Activated B cell treated with CpG ODN at 0.5 μM for 24 hours (primary cell): ENCODE measurements at regions of chr7 and their contacts with region 1.

Region 1: DNA sequence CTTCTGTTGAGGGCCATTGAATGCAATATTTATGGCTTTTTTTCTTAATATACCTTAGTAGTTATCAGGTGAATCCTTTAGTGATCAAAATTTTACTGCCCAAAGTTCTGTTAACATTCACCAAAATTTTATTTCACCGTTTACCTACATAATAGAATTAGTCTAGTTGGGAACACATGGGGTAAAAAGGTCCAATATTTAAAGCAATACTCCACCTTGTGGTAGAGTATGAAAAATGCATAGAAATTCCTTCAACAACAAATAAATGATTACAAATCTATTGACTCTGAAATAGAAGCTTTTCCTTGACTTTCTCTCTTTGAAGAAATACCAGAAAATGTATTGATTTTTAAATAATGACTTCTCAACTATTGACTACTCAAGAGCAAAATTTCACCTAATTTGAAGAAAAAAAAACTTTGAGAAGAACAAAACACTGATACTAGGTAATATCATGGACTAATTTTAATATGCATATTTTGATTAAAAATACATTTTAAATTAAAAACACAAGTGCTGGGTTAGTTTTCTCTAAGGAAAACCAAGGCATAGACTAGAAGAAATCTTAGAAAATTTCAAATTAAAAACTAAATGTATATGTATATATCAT is 43.3 kb downstream of the POLR1F start:
- DNase-seq: no peak
- ATAC-seq: peak; percentile 32
- H3K4me3 Mint-ChIP-seq: no peak overlapping the region
- H3K27ac Mint-ChIP-seq: no peak overlapping the region
- H3K4me1 Mint-ChIP-seq: peaks cover 20% of the 10 kb centered on the region
- H3K27me3 Mint-ChIP-seq: no peaks in the 10 kb centered on the region
- CTCF ChIP-seq: no peak

Region 2: GRCh38 chr7:17769918-17770317 is 1895.6 kb before region 1 on chr7:
- CTCF ChIA-PET with region 1: no interaction called
- POLR2A ChIA-PET with region 1: no interaction called
- intact Hi-C with region 1: loop called (anchors 2 kb)
- DNase-seq: no peak
- ATAC-seq: peak; percentile 75
- H3K4me3 Mint-ChIP-seq: no peak overlapping the region
- H3K27ac Mint-ChIP-seq: no peak overlapping the region
- H3K4me1 Mint-ChIP-seq: peaks cover 11% of the 10 kb centered on the region
- H3K27me3 Mint-ChIP-seq: no peaks in the 10 kb centered on the region
- CTCF ChIP-seq: no peak

Region 3: DNA sequence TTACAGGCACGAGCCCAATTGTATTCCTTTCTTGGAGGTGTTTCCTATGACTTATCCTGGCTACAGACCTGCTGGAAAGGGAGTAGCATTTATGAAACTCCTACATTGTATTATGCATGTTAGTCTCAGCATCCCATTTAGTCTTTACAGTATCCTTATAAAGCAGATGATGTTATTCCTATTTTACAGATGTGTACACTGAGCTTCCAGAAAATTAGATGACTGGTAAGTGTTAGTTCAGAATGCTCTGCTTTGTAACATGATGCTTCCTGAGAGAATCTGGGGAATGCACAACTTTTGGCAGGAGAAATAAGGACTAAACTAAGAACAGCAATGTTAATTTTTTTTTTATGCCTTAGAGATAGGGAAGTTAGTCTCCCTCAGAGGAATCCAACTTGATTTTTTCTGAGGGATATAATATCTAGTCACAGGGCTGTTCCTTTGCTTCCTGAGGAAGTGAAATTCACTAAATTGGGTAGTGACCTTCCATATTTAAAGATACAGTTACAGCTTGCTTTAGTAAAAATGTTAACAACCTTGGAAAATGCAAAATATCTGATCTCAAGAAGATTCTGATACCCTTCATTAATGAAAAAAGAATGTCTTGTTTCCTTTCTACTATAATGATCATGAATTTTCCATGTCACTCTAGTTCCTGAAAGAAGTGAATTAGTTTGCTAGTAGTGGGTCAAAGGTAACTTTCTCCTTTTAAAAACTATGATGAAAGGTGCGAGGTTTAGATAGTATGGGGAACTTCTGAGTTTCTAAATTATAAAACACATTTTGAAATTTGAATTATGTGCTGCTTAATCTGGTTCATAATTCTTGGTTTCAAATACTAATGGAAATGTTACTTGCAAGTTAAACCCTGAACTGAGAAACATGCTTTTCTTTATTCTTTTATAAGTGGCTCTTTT is 1443.9 kb before region 1 on chr7:
- CTCF ChIA-PET with region 1: no interaction called
- POLR2A ChIA-PET with region 1: no interaction called
- intact Hi-C with region 1: loop called (anchors 5 kb)
- DNase-seq: no peak
- ATAC-seq: no peak
- H3K4me3 Mint-ChIP-seq: no peak overlapping the region
- H3K27ac Mint-ChIP-seq: peak overlapping the region; percentile 12
- H3K4me1 Mint-ChIP-seq: peaks cover 56% of the 10 kb centered on the region
- H3K27me3 Mint-ChIP-seq: no peaks in the 10 kb centered on the region
- CTCF ChIP-seq: no peak

Region 4: DNA sequence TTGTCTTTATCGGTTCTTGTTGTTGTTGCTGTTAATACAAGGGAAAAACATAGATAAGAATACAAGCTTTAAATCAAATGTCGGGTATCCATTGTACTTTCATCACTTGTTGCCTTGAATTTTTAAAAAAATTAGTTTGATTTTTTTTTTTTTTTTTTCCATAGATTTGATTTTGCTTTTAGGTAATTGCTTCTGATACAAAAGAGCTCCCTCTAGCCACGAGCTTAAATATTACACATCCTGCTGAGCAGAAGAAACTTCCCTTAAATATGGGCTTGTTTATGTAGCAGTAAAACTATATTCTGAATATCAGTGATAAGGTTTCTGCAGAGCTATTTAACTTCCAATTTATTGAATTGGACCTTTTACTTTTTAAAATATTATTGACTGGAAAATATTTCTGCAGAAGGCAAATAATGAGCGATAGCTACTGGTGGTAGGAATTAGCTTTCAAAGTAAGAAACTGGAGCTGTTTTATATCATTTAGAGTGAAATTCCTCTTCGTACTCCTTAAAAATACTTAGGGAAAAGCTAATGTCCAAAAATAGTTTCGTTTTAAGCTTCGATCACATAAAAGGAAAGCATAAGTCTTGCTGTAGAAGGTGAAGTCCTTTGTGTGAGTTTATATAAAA is 173.6 kb before region 1 on chr7:
- CTCF ChIA-PET with region 1: no interaction called
- POLR2A ChIA-PET with region 1: no interaction called
- intact Hi-C with region 1: loop called (anchors 2 kb)
- DNase-seq: no peak
- ATAC-seq: no peak
- H3K4me3 Mint-ChIP-seq: no peak overlapping the region
- H3K27ac Mint-ChIP-seq: no peak overlapping the region
- H3K4me1 Mint-ChIP-seq: no peaks in the 10 kb centered on the region
- H3K27me3 Mint-ChIP-seq: no peaks in the 10 kb centered on the region
- CTCF ChIP-seq: no peak

Region 5: DNA sequence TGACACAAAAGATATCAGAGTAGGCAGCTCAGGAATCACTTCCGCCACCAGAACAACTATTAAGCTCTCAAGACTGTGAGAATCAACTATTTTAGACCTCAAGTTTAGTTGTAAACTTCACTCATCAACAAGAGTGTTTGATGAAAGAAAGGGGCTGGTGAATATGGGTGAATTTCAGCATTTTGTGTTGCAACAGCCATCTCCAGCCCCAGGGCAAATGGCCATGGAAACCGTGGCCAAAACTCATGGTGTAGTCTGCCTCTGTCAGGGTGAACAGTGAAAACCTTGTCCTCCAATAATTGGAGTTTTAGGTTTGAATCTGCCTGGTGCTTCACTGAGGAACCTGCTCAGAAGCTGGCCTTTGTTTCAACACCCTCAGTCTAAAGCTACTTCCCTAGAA is 16.7 kb before region 1 on chr7:
- CTCF ChIA-PET with region 1: no interaction called
- POLR2A ChIA-PET with region 1: no interaction called
- intact Hi-C with region 1: no loop called
- DNase-seq: no peak
- ATAC-seq: no peak
- H3K4me3 Mint-ChIP-seq: no peak overlapping the region
- H3K27ac Mint-ChIP-seq: no peak overlapping the region
- H3K4me1 Mint-ChIP-seq: no peaks in the 10 kb centered on the region
- H3K27me3 Mint-ChIP-seq: peaks cover 14% of the 10 kb centered on the region
- CTCF ChIP-seq: no peak